Body of pancreas (tissue), 4 donors: ENCODE measurements at regions of chr3 and their contacts with region 1.

Region 1: GRCh38 chr3:39499651-39500240 is 32.3 kb downstream of the MOBP start:
- DNase-seq: no peak
- ATAC-seq: no peak
- H3K4me3 ChIP-seq: no peak overlapping the region
- H3K27ac ChIP-seq: no peak overlapping the region
- H3K4me1 ChIP-seq: peaks cover 10% of the 10 kb centered on the region
- H3K27me3 ChIP-seq: peaks cover 0 to 14% of the 10 kb centered on the region in 2 donors
- CTCF ChIP-seq: no peak
- POLR2A ChIP-seq: no peak

Region 2: GRCh38 chr3:38101811-38102443 is 1397.8 kb before region 1 on chr3:
- intact Hi-C with region 1: no loop called
- DNase-seq: no peak
- ATAC-seq: no peak
- H3K4me3 ChIP-seq: no peak overlapping the region
- H3K27ac ChIP-seq: no peak overlapping the region
- H3K4me1 ChIP-seq: no peaks in the 10 kb centered on the region
- H3K27me3 ChIP-seq: no peaks in the 10 kb centered on the region
- CTCF ChIP-seq: no peak
- POLR2A ChIP-seq: no peak

Region 3: GRCh38 chr3:39443530-39443929 is 56.2 kb before region 1 on chr3:
- intact Hi-C with region 1: loop called (anchors 5 kb)
- DNase-seq: no peak
- ATAC-seq: no peak
- H3K4me3 ChIP-seq: no peak overlapping the region
- H3K27ac ChIP-seq: no peak overlapping the region
- H3K4me1 ChIP-seq: peaks cover 8% of the 10 kb centered on the region
- H3K27me3 ChIP-seq: no peaks in the 10 kb centered on the region
- CTCF ChIP-seq: no peak
- POLR2A ChIP-seq: no peak

Region 4: GRCh38 chr3:39718674-39719595 is 219.2 kb after region 1 on chr3:
- intact Hi-C with region 1: no loop called
- DNase-seq: no peak
- ATAC-seq: no peak
- H3K4me3 ChIP-seq: no peak overlapping the region
- H3K27ac ChIP-seq: no peak overlapping the region
- H3K4me1 ChIP-seq: no peaks in the 10 kb centered on the region
- H3K27me3 ChIP-seq: no peaks in the 10 kb centered on the region
- CTCF ChIP-seq: no peak
- POLR2A ChIP-seq: no peak

Region 5: DNA sequence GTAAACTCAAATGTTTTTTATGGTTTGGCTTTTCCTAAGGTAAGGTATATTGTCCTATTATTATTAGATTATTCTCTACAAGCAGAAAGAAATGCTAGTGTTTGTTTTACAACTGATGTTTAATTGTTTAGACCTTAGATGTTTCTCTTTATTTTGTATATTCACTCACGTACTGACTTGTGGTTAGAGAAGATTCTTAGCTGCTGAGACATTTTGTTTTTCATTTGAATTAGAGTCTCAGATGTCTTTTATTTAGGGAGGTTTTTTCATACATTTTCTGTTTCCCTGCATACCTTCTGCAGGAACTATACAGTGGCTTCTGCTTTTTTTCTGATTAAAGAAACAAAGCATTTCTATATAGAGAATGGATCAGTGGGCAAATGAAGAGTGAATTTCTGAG is 420.5 kb after region 1 on chr3:
- intact Hi-C with region 1: no loop called
- DNase-seq: no peak
- ATAC-seq: no peak
- H3K4me3 ChIP-seq: no peak overlapping the region
- H3K27ac ChIP-seq: no peak overlapping the region
- H3K4me1 ChIP-seq: no peaks in the 10 kb centered on the region
- H3K27me3 ChIP-seq: no peaks in the 10 kb centered on the region
- CTCF ChIP-seq: no peak
- POLR2A ChIP-seq: no peak